Mammary epithelial cell (primary cell): ENCODE measurements at regions of chr12 and their contacts with region 1.

Region 1: DNA sequence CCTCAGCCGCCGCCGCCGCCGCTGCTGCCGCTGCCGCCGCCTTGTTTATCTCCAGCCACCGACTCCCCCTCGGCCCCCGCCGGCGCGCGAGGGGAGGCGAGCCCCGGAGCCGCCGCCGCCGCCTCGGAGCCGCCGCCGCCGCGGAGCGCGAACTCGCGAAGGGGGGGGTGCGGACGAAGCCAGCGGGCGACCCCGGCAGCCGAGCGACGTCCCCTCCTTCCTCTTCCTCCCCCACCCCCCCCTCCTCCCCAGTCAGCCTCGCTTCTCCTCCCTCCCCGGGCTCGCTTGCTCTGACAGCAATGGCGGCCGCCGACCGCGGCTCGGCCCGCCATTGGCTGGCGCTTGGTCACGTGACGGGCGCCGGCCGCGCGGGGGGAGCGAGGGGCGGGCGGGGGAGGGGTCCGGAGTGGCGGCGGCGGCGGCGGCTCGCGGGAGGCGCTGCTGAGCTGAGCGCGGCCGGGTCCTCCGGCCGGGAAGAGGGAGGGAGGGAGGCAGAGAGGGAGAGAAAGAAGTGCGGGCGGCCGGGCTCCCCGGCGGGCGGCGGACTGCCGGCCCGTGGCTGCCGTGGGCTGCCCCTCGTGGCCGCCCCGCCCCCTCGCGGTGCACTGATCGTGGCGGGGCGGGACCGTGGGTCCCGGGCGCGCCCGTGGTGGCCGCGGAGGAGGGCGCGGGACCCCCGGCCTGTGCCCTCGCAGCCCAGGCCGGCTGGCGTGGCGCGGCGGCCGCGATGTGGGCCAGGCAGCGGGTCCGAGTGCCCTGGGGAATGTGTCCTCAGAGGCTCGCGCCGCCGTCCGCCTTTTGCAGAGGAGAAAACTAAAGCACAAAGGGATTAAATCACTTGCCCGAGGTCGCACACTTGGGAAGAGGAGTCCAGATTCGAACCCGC is at the start of gene MED13L:
- DNase-seq: peak; percentile 83
- H3K4me3 ChIP-seq: peak within 1 kb of the TSS; percentile 72 to 91 (median 89)
- H3K27ac ChIP-seq: peak within 1 kb of the TSS; percentile 65
- H3K4me1 ChIP-seq: peaks cover 4% of the 10 kb centered on the region
- H3K27me3 ChIP-seq: no peaks in the 10 kb centered on the region
- CTCF ChIP-seq: peak in 1 of 2 donors; percentile 35
- total RNA-seq, gene MED13L: 85.6 to 140 TPM

Region 2: DNA sequence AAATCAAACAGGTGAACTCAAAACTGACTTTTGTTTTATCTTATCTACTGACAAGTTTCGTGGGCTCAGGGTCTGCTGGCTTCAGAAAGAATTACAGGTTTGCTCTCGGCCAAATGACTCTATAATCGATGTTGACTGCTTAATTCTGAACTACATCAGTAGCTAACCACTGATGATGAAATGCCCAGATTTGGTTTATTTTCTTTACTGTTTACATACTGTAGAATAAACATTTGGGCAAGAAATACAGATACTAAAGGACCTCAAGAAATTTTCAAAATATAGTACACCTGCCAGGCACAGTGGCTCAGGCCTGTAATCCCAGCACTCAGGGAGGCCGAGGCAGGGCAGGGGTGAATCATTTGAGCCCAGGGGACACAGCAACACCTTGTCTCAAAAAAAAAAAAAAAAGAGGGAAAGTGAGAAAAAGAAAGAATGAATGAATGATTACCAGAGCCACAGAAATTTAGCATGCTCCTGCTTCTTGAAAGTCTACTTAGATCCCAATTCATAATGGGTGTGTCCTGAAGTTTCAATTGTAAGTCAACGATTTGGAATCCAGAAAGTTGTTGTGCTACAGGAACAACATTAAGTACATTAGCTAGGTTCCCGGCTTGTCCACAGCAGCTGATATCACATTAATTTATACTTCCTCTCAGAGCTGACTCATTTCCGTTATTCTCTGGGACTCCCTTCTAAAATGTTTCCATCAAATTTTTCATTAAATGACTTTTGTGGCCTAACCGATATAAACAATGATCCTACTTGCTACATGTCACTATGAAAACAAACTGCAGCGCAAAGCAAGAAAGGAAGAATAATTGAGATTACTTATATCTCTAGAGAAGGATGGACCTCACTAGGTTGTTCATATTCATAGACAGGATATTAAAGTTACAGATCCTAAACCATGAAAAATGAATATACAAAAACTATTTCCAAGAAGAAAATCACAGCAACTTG is 134.4 kb before region 1 on chr12:
- CTCF ChIA-PET with region 1: no interaction called
- dilution Hi-C with region 1: no loop called
- in situ Hi-C with region 1: no loop called
- intact Hi-C with region 1: loop called (anchors 5 kb)
- DNase-seq: peak; percentile 75
- H3K4me3 ChIP-seq: no peak overlapping the region
- H3K27ac ChIP-seq: peak overlapping the region; percentile 33
- H3K4me1 ChIP-seq: peaks cover 26% of the 10 kb centered on the region
- H3K27me3 ChIP-seq: no peaks in the 10 kb centered on the region
- CTCF ChIP-seq: no peak

Region 3: DNA sequence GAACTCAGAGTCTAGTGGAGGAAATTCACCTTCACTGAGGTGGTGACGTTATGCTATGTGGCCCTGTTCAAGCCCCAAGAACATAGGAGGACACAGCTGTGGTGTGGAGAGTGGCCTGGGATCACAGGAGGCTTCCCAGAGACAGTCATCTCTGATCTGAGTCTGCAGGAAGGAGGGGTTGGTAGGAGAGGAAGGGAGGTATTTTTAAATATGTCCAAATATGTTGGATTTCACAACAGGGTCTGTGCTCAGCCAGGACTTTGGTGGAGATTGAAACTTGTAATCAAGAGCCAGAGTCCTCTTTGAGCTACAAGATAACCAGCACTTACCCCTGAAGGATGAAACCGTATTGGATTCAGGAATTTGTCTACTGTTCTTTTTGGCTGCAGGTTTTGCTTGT is 26.3 kb after region 1 on chr12:
- CTCF ChIA-PET with region 1: no interaction called
- dilution Hi-C with region 1: no loop called
- in situ Hi-C with region 1: no loop called
- intact Hi-C with region 1: no loop called
- DNase-seq: no peak
- H3K4me3 ChIP-seq: no peak overlapping the region
- H3K27ac ChIP-seq: no peak overlapping the region
- H3K4me1 ChIP-seq: no peaks in the 10 kb centered on the region
- H3K27me3 ChIP-seq: no peaks in the 10 kb centered on the region
- CTCF ChIP-seq: no peak

Region 4: DNA sequence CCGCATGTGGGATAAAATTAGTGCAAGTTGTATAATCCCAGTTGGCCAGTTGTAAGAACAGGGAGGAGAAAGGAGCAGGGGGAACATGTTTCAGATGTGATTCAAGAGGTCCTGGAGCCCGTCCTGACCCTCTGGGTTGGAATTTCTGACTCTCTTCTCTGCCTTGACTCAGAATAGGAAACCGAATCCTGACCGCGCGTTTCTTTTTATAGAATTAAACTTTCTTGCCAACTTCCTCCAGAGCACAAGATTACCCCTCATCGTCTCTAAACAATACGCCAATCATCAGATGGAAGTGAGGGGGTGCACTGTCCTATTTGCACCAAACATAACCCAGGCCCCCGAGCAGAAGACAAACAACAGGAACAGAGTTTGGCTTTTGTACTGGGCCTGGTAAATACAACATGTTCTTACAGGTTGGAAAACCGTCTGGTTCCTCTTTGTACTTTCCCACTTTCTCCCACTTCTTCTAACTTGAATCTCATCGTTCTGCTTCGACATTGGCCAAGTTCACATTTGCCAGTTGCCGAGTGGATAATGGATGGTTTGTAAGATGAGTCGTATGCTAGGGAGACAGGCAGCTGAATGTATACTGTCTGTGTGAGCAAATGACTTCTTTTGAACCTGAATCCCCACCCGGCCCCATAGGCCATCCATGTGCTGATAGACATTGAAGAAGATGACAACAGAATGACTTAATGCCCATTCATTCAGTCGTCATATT is 42.4 kb after region 1 on chr12:
- CTCF ChIA-PET with region 1: no interaction called
- dilution Hi-C with region 1: no loop called
- in situ Hi-C with region 1: no loop called
- intact Hi-C with region 1: loop called (anchors 2 kb)
- DNase-seq: peak; percentile 86
- H3K4me3 ChIP-seq: peak overlapping the region in 1 of 3 experiments; percentile 13
- H3K27ac ChIP-seq: peak overlapping the region; percentile 86
- H3K4me1 ChIP-seq: peaks cover 32% of the 10 kb centered on the region
- H3K27me3 ChIP-seq: no peaks in the 10 kb centered on the region
- CTCF ChIP-seq: no peak

Region 5: GRCh38 chr12:116389990-116390389 is 112.4 kb after region 1 on chr12:
- CTCF ChIA-PET with region 1: interaction called, 10 read pairs
- dilution Hi-C with region 1: no loop called
- in situ Hi-C with region 1: no loop called
- intact Hi-C with region 1: no loop called
- DNase-seq: peak; percentile 97
- H3K4me3 ChIP-seq: no peak overlapping the region
- H3K27ac ChIP-seq: peak overlapping the region; percentile 9
- H3K4me1 ChIP-seq: peaks cover 24% of the 10 kb centered on the region
- H3K27me3 ChIP-seq: no peaks in the 10 kb centered on the region
- CTCF ChIP-seq: no peak

Region 6: GRCh38 chr12:116525418-116526001 is 247.9 kb after region 1 on chr12:
- CTCF ChIA-PET with region 1: interaction called, 7 read pairs
- dilution Hi-C with region 1: no loop called
- in situ Hi-C with region 1: no loop called
- intact Hi-C with region 1: loop called (anchors 1 kb)
- DNase-seq: peak; percentile 89
- H3K4me3 ChIP-seq: peak overlapping the region in 2 of 3 experiments; percentile 12 to 13
- H3K27ac ChIP-seq: peak overlapping the region; percentile 93
- H3K4me1 ChIP-seq: peaks cover 54% of the 10 kb centered on the region
- H3K27me3 ChIP-seq: no peaks in the 10 kb centered on the region
- CTCF ChIP-seq: no peak